K562 (cell line): ENCODE measurements at regions of chr2 and their contacts with region 1.

Region 1: DNA sequence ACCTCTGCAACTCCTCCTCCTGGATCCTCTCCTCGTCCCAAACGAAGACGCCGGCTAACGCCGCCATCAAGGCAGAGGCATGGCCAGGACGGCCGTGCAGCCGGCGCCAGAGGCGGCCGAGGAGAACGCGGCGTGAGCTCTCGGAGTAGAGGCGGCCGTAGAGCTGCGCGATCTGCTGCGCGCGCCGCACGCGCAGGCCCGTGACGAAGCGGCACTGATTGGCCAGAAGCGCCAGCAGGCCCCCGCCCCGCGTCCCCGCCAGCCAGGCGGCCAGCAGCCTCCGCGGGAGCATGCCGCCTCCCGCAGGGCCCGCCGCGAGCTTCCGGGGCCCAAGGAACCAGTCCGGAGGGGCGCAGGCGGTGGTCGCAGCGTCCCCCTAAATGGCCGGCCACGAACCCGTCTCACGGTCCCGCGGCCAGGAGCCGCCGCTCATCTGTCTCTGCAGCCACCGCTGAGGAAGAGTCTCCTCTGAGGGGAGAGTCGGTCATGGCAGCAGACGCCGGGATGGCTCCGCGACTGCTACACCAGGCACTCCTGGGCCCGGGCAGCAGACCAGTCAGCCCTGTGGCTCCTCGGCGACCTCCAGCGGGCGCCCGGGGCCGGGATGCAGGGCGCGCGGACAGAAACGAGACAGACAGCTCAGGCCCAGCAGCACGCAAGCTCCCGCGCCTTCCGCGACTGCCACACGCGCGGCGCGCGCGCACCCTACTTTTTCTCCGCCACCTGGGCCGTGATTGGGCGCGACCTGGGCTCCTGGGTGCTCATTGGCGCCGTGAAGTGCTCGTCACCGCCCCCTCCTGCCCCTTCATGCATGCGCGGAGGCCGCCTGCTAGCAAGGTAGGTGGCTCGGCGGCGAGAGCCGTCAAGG is at the start of gene STARD7:
- DNase-seq: peak; percentile 96 to 99 (median 98)
- ATAC-seq: peak; percentile 94
- H3K4me3 ChIP-seq: peak within 1 kb of the TSS; percentile 84
- H3K27ac ChIP-seq: peak within 1 kb of the TSS; percentile 97
- H3K4me1 ChIP-seq: peaks cover 26 to 28% of the 10 kb centered on the region in 2 experiments
- H3K27me3 ChIP-seq: no peaks in the 10 kb centered on the region
- CTCF ChIP-seq: peak in 2 of 3 experiments; percentile 17 to 36; a peak in 2 of 6 replicates
- EP300 ChIP-seq: no peak
- POLR2A ChIP-seq: peak; percentile 98
- RAD21 ChIP-seq: peak; percentile 23 to 40
- polyA plus RNA-seq, gene STARD7: 90.9 to 140 TPM

Region 2: DNA sequence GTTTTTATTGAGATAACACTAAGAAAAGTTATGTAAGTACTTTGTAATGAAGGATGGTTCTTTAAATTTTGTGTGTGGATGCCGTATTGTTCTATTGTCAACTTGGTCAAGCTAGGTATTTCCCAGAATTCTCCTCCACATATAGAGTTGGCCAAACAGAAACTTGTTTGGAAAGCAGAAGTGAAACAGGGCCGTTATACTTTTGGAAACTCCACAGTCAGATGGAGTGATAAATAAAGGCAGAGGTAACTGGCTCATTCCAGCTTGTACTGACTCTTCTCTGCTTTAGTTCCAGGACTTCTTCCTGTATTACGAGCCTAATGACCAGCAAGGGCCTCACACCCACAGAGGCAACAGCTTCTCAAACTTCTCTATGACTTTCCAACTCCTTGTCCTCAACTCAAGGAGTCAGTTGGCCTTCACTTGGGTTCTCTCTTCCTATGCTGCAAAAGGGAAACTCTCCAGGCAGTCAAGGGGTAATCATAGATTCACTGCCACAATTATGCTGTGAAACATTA is 16.7 kb after region 1 on chr2:
- CTCF ChIA-PET with region 1: no interaction called
- POLR2A ChIA-PET with region 1: interaction called, 10 read pairs
- in situ Hi-C with region 1: no loop called
- intact Hi-C with region 1: no loop called
- DNase-seq: peak in 2 of 4 experiments; percentile 27 to 53
- ATAC-seq: peak; percentile 96
- H3K4me3 ChIP-seq: no peak overlapping the region
- H3K27ac ChIP-seq: peak overlapping the region; percentile 78
- H3K4me1 ChIP-seq: peaks cover 0 to 7% of the 10 kb centered on the region in 2 experiments; a peak in 4 of 5 replicates
- H3K27me3 ChIP-seq: no peaks in the 10 kb centered on the region
- CTCF ChIP-seq: no peak
- EP300 ChIP-seq: peak; percentile 73; the same call in 1 of the 2 replicates
- POLR2A ChIP-seq: no peak
- RAD21 ChIP-seq: peak in 1 of 2 experiments; percentile 27; a peak in 1 of 4 replicates

Region 3: GRCh38 chr2:96260404-96261260 is 52.3 kb after region 1 on chr2:
- CTCF ChIA-PET with region 1: no interaction called
- POLR2A ChIA-PET with region 1: interaction called, 6 read pairs
- in situ Hi-C with region 1: no loop called
- intact Hi-C with region 1: loop called (anchors 2 kb)
- DNase-seq: peak; percentile 56 to 75 (median 66)
- ATAC-seq: peak; percentile 78
- H3K4me3 ChIP-seq: no peak overlapping the region
- H3K27ac ChIP-seq: peak overlapping the region; percentile 62
- H3K4me1 ChIP-seq: peaks cover 24 to 34% of the 10 kb centered on the region in 2 experiments
- H3K27me3 ChIP-seq: no peaks in the 10 kb centered on the region
- CTCF ChIP-seq: peak; percentile 61 to 65 (median 64)
- EP300 ChIP-seq: no peak; the same call in 1 of the 2 replicates
- POLR2A ChIP-seq: no peak
- RAD21 ChIP-seq: peak; percentile 41 to 51